Activated CD8-positive, alpha-beta T cell treated with anti-CD3 and anti-CD28 coated beads for 36 hours (primary cell): ENCODE measurements at regions of chr2 and their contacts with region 1.

Region 1: DNA sequence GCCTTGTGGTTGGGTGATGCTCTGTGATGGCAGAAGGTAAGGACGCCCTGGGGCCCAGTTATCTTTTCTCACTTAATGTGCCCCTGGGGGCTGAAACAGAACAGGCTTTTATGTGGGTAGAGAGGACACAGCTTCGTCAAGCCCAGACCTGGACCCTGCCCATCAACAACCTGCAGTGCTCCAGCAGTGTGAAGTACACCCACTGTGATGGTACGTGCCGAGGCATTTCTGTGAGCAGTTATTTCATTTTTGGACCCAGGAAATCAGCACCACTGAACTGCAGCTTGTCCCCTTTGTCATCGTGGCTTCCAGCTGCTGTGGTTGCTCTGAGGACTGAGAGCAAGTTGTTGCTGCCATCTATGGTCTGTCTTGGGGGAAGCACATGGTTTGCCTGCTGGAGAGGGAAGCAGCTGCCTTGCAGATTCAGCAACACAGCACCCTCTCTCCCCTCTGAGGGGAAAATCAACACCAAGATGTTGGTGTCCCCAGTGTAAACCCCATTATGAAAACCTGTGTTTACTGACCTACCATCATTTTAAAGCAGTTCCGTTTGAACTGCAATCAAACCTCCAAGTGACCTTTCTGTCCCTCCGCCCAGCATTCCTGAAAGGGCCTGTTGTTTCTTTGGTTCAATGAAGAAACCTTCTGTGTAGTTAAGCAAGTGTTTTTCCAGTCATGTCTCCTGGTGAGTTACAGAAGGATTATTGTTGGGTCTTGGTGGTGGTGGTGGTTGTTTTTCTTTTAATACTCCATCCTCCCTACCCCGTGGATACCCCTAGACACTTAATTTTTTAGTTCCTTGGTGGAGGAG is 158.2 kb downstream of the MGAT5 start:
- DNase-seq: peak; percentile 82
- ATAC-seq: peak; percentile 96
- H3K4me3 Mint-ChIP-seq: no peak overlapping the region
- H3K27ac Mint-ChIP-seq: peak overlapping the region; percentile 38
- H3K4me1 Mint-ChIP-seq: peaks cover 45% of the 10 kb centered on the region
- H3K27me3 Mint-ChIP-seq: no peaks in the 10 kb centered on the region
- CTCF ChIP-seq: peak; percentile 62

Region 2: DNA sequence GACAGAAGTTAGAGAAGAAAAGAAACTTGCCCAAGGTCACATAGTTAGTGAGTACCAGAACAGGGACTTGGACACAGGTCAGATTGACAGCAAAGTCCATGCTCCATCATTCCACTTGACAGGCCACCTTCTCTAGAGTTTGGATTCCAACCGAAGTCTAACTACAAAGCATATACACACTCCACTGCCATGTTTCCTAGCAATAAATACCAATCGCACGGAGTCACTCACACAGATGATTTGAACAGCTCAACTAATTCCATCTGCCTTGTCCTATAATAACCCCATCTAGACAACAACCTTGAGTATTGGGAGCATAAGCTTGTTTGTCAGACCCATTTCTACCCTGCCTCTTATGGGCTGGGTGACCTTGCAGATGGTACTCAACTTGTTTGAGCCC is 492.7 kb before region 1 on chr2:
- CTCF ChIA-PET with region 1: no interaction called
- POLR2A ChIA-PET with region 1: no interaction called
- intact Hi-C with region 1: no loop called
- DNase-seq: no peak
- ATAC-seq: no peak
- H3K4me3 Mint-ChIP-seq: no peak overlapping the region
- H3K27ac Mint-ChIP-seq: no peak overlapping the region
- H3K4me1 Mint-ChIP-seq: no peaks in the 10 kb centered on the region
- H3K27me3 Mint-ChIP-seq: peaks cover 3% of the 10 kb centered on the region
- CTCF ChIP-seq: no peak

Region 3: GRCh38 chr2:134118279-134119116 is 293.5 kb before region 1 on chr2:
- CTCF ChIA-PET with region 1: interaction called, 114 read pairs
- POLR2A ChIA-PET with region 1: interaction called, 15 read pairs
- intact Hi-C with region 1: loop called (anchors 2 kb)
- DNase-seq: peak; percentile 97
- ATAC-seq: peak; percentile 61
- H3K4me3 Mint-ChIP-seq: peak overlapping the region; percentile 94
- H3K27ac Mint-ChIP-seq: no peak overlapping the region
- H3K4me1 Mint-ChIP-seq: peaks cover 32% of the 10 kb centered on the region
- H3K27me3 Mint-ChIP-seq: peaks cover 2% of the 10 kb centered on the region
- CTCF ChIP-seq: peak; percentile 75

Region 4: DNA sequence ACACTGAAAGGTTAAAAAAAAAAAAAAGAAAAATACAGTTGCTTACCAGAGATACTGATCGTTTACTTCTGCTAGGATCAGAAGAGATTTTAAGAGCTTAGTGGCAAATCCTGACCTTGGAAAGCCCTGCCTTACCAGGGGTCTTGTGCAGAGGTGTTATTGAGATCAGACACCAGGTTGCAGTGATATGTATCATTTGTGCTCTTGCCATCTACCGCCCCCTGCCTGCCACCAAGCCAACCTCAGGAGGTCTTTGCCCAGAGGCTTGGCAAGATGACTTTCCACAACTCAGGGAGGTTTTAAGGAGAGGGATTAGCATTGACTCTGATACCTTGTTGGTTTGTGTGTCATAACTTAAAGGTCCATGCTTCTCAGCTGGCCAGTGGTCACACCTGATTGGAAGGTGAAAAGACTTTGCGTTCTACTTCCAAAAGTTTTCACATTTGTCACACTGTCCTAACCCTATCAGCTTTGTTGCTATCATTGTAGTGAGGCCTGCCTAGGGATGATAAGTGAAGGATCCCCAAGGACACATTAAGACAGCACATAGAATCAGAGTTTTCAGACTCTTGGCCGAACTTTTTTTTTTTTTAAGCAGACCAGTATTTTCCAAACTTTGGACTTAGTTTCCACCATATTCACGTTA is 204.3 kb before region 1 on chr2:
- CTCF ChIA-PET with region 1: interaction called, 26 read pairs
- POLR2A ChIA-PET with region 1: interaction called, 3 read pairs
- intact Hi-C with region 1: no loop called
- DNase-seq: peak; percentile 80
- ATAC-seq: peak; percentile 92
- H3K4me3 Mint-ChIP-seq: no peak overlapping the region
- H3K27ac Mint-ChIP-seq: no peak overlapping the region
- H3K4me1 Mint-ChIP-seq: peaks cover 6% of the 10 kb centered on the region
- H3K27me3 Mint-ChIP-seq: no peaks in the 10 kb centered on the region
- CTCF ChIP-seq: peak; percentile 64

Region 5: GRCh38 chr2:134232868-134233727 is 178.9 kb before region 1 on chr2:
- CTCF ChIA-PET with region 1: interaction called, 10 read pairs
- POLR2A ChIA-PET with region 1: no interaction called
- intact Hi-C with region 1: no loop called
- DNase-seq: no peak
- ATAC-seq: peak; percentile 67
- H3K4me3 Mint-ChIP-seq: peak overlapping the region; percentile 2
- H3K27ac Mint-ChIP-seq: peak overlapping the region; percentile 90
- H3K4me1 Mint-ChIP-seq: peaks cover 78% of the 10 kb centered on the region
- H3K27me3 Mint-ChIP-seq: no peaks in the 10 kb centered on the region
- CTCF ChIP-seq: peak; percentile 19

Region 6: DNA sequence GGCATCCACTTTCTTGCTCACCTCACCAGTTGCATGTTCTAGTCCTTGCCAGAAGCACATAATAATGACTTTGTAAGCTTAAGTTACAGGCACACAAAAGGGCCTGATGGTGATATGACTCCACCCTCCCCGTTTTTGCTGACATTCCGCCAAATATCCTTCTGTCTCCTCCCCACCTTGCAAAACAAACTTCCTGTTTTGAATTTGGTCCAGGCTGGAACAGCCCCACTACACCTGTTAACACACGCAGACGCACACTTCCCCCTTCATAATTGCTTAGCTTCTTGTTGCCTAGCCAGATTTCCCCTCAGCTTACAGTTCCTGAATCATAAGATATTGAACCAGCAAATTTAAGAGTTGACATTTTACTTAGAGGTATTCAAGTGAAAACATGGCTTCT is 158.2 kb before region 1 on chr2 and contains the start of gene MGAT5:
- CTCF ChIA-PET with region 1: interaction called, 11 read pairs
- POLR2A ChIA-PET with region 1: interaction called, 3 read pairs
- intact Hi-C with region 1: loop called (anchors 10 kb)
- DNase-seq: no peak
- ATAC-seq: no peak
- H3K4me3 Mint-ChIP-seq: no peak within 1 kb of the TSS
- H3K27ac Mint-ChIP-seq: peak within 1 kb of the TSS; percentile 18
- H3K4me1 Mint-ChIP-seq: peaks cover 89% of the 10 kb centered on the region
- H3K27me3 Mint-ChIP-seq: no peaks in the 10 kb centered on the region
- CTCF ChIP-seq: no peak
- total RNA-seq, gene MGAT5: 36.9 to 42.2 TPM

Region 7: GRCh38 chr2:134398300-134398699 is 13.7 kb before region 1 on chr2:
- CTCF ChIA-PET with region 1: interaction called, 10 read pairs
- POLR2A ChIA-PET with region 1: interaction called, 3 read pairs
- intact Hi-C with region 1: no loop called
- DNase-seq: no peak
- ATAC-seq: no peak
- H3K4me3 Mint-ChIP-seq: no peak overlapping the region
- H3K27ac Mint-ChIP-seq: no peak overlapping the region
- H3K4me1 Mint-ChIP-seq: no peaks in the 10 kb centered on the region
- H3K27me3 Mint-ChIP-seq: no peaks in the 10 kb centered on the region
- CTCF ChIP-seq: no peak